Activated naive CD4-positive, alpha-beta T cell treated with anti-CD3 and anti-CD28 coated beads for 36 hours (primary cell): ENCODE measurements at regions of chr5 and their contacts with region 1.

Region 1: GRCh38 chr5:157271740-157272271 is 5.9 kb downstream of the CYFIP2 start:
- DNase-seq: peak; percentile 96
- H3K4me3 Mint-ChIP-seq: peak overlapping the region; percentile 74
- H3K27ac Mint-ChIP-seq: peak overlapping the region; percentile 99
- H3K4me1 Mint-ChIP-seq: peaks cover 79% of the 10 kb centered on the region
- H3K27me3 Mint-ChIP-seq: no peaks in the 10 kb centered on the region

Region 2: DNA sequence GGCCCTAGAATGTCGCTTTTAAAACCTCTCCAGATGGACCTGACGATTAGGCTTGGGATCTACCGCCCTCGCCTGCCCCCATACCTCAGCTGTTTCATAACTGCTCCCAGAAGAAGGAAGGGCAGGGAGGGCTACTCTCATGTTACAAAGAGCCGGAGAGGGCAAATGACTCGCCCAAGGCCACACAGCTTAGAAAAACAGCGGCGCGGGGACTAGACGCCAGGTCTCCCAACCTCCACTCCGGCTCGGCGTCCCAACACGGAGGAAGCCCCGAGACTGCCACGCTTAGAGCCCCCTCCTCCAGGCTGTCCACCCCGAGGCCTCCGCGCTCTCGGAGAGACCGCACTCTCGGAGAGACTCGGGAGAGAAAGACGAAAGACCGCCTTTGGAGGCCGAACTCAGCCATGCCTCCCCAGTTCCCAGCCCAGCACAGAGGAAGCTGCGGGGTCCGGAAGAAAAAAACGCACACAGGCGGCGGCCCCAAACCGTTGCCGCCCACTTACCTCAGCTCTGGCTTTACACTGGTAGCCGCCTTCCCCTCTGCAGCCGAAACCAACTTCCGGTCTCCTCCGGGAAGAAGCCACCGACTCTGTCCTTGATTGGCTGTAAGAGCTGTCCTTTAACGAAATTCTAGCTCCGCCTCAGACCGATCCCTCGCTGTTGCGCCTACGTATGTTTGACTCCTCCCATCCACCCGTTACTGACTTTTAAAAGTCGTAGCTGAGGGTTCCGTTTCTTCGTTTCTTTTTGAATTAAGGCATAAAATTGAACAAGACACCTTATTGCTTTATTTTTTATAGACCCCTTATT is 129.3 kb before region 1 on chr5 and contains the start of gene MED7:
- CTCF ChIA-PET with region 1: interaction called, 20 read pairs
- intact Hi-C with region 1: loop called (anchors 1 kb)
- DNase-seq: peak; percentile 97
- H3K4me3 Mint-ChIP-seq: peak within 1 kb of the TSS; percentile 94
- H3K27ac Mint-ChIP-seq: peak within 1 kb of the TSS; percentile 98
- H3K4me1 Mint-ChIP-seq: peaks cover 38% of the 10 kb centered on the region
- H3K27me3 Mint-ChIP-seq: no peaks in the 10 kb centered on the region
- total RNA-seq, gene MED7: 21.0 to 21.2 TPM

Region 3: GRCh38 chr5:157233515-157233914 is 38.3 kb before region 1 on chr5:
- CTCF ChIA-PET with region 1: interaction called, 3 read pairs
- intact Hi-C with region 1: loop called (anchors 1 kb)
- DNase-seq: peak; percentile 54
- H3K4me3 Mint-ChIP-seq: peak overlapping the region; percentile 53
- H3K27ac Mint-ChIP-seq: peak overlapping the region; percentile 96
- H3K4me1 Mint-ChIP-seq: peaks cover 82% of the 10 kb centered on the region
- H3K27me3 Mint-ChIP-seq: no peaks in the 10 kb centered on the region

Region 4: DNA sequence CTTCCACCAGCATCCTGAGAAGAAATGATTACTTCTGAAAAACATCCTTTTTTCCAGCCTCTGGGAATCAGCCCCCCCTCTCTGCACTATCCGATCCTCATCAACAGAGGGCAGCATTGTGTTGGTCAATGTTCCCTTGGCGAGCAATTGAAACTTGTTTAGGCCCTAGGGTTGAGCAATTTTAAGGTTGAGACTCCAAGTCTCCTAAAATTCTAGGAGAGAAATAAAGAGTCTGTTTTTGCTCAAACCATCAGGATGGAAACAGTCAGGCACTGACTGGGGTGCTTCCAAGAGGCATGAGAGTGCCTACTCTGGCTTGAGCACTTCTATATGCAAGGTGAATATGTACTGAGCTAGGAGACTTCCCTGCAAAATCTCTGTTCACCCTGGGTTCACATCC is 18.3 kb before region 1 on chr5:
- CTCF ChIA-PET with region 1: interaction called, 18 read pairs
- intact Hi-C with region 1: loop called (anchors 2 kb)
- DNase-seq: no peak
- H3K4me3 Mint-ChIP-seq: no peak overlapping the region
- H3K27ac Mint-ChIP-seq: peak overlapping the region; percentile 97
- H3K4me1 Mint-ChIP-seq: peaks cover 91% of the 10 kb centered on the region
- H3K27me3 Mint-ChIP-seq: no peaks in the 10 kb centered on the region

Region 5: DNA sequence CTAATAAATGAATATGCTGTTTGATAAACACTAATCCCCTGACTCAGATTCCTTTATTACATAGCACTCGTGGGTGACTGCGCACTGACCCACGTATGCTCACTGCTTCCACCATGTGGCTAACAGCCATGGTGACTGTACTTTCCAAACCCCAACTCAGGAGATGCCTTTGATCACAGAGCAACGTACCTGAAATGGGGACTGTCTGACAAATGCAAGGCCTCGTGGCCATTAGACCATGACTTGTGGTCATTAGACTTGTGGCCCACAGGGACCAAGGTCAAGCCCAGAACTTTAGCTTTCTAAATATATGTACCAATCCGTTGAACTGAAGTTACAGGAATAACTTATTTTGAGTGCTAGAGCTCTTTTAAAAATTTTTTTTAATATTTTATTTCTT is 40.7 kb after region 1 on chr5:
- CTCF ChIA-PET with region 1: interaction called, 12 read pairs
- intact Hi-C with region 1: loop called (anchors 1 kb)
- DNase-seq: peak; percentile 82
- H3K4me3 Mint-ChIP-seq: no peak overlapping the region
- H3K27ac Mint-ChIP-seq: peak overlapping the region; percentile 90
- H3K4me1 Mint-ChIP-seq: peaks cover 41% of the 10 kb centered on the region
- H3K27me3 Mint-ChIP-seq: no peaks in the 10 kb centered on the region